Naive thymus-derived CD4-positive, alpha-beta T cell (primary cell): ENCODE measurements at regions of chr10 and their contacts with region 1.

Region 1: GRCh38 chr10:8331883-8332729 is 277.6 kb downstream of the GATA3 start:
- DNase-seq: peak; percentile 78 to 96 (median 93)
- ATAC-seq: peak; percentile 97
- H3K4me3 ChIP-seq: peak overlapping the region; percentile 71
- H3K4me3 Mint-ChIP-seq: peak overlapping the region; percentile 65 to 92 (median 84)
- H3K27ac ChIP-seq: peak overlapping the region; percentile 83
- H3K27ac Mint-ChIP-seq: peak overlapping the region; percentile 88 to 97 (median 93)
- H3K4me1 ChIP-seq: peaks cover 9 to 23% of the 10 kb centered on the region in 2 donors
- H3K4me1 Mint-ChIP-seq: peaks cover 21 to 53% (median 40%) of the 10 kb centered on the region in 7 donors
- H3K27me3 ChIP-seq: no peaks in the 10 kb centered on the region
- H3K27me3 Mint-ChIP-seq: peaks cover 0 to 10% (median 0%) of the 10 kb centered on the region in 5 donors

Region 2: GRCh38 chr10:7818295-7819122 is 513.6 kb before region 1 on chr10 and contains the start of gene TAF3:
- CTCF ChIA-PET with region 1: no interaction called
- POLR2A ChIA-PET with region 1: no interaction called
- intact Hi-C with region 1: loop called (anchors 1 to 10 kb)
- DNase-seq: peak; percentile 87 to 94 (median 91)
- ATAC-seq: peak; percentile 99
- H3K4me3 ChIP-seq: peak within 1 kb of the TSS; percentile 90
- H3K4me3 Mint-ChIP-seq: peak within 1 kb of the TSS; percentile 92 to 100 (median 97)
- H3K27ac ChIP-seq: peak within 1 kb of the TSS; percentile 75
- H3K27ac Mint-ChIP-seq: peak within 1 kb of the TSS; percentile 71 to 96 (median 93)
- H3K4me1 ChIP-seq: peaks cover 0 to 6% of the 10 kb centered on the region in 2 donors
- H3K4me1 Mint-ChIP-seq: peaks cover 28 to 56% (median 48%) of the 10 kb centered on the region in 7 donors
- H3K27me3 ChIP-seq: no peaks in the 10 kb centered on the region
- H3K27me3 Mint-ChIP-seq: peaks cover 0 to 34% (median 0%) of the 10 kb centered on the region in 5 donors
- total RNA-seq, gene TAF3: 15.3 to 23.9 (median 18.8) TPM

Region 3: GRCh38 chr10:8059959-8060703 is 272.0 kb before region 1 on chr10:
- CTCF ChIA-PET with region 1: interaction called, 5 read pairs
- POLR2A ChIA-PET with region 1: interaction called, 13 read pairs
- intact Hi-C with region 1: loop called (anchors 1 to 2 kb)
- DNase-seq: peak; percentile 17 to 79 (median 72)
- ATAC-seq: peak; percentile 45
- H3K4me3 ChIP-seq: peak overlapping the region; percentile 51
- H3K4me3 Mint-ChIP-seq: peak overlapping the region; percentile 87 to 100 (median 94)
- H3K27ac ChIP-seq: peak overlapping the region; percentile 82
- H3K27ac Mint-ChIP-seq: peak overlapping the region; percentile 88 to 99 (median 95)
- H3K4me1 ChIP-seq: peaks cover 52 to 62% of the 10 kb centered on the region in 2 donors
- H3K4me1 Mint-ChIP-seq: peaks cover 57 to 80% (median 76%) of the 10 kb centered on the region in 7 donors
- H3K27me3 ChIP-seq: no peaks in the 10 kb centered on the region
- H3K27me3 Mint-ChIP-seq: peaks cover 0 to 6% (median 0%) of the 10 kb centered on the region in 5 donors

Region 4: GRCh38 chr10:8183241-8183704 is 148.8 kb before region 1 on chr10:
- CTCF ChIA-PET with region 1: no interaction called
- POLR2A ChIA-PET with region 1: no interaction called
- intact Hi-C with region 1: loop called in 1 of 2 experiments (anchors 5 kb)
- DNase-seq: peak in 7 of 9 donors; percentile 38 to 67 (median 57)
- ATAC-seq: peak; percentile 95
- H3K4me3 ChIP-seq: no peak overlapping the region
- H3K4me3 Mint-ChIP-seq: peak overlapping the region; percentile 14 to 82 (median 56)
- H3K27ac ChIP-seq: peak overlapping the region; percentile 44
- H3K27ac Mint-ChIP-seq: peak overlapping the region; percentile 4 to 90 (median 80)
- H3K4me1 ChIP-seq: peaks cover 14 to 20% of the 10 kb centered on the region in 2 donors
- H3K4me1 Mint-ChIP-seq: peaks cover 18 to 42% (median 37%) of the 10 kb centered on the region in 7 donors
- H3K27me3 ChIP-seq: no peaks in the 10 kb centered on the region
- H3K27me3 Mint-ChIP-seq: peaks cover 0 to 20% (median 4%) of the 10 kb centered on the region in 5 donors

Region 5: DNA sequence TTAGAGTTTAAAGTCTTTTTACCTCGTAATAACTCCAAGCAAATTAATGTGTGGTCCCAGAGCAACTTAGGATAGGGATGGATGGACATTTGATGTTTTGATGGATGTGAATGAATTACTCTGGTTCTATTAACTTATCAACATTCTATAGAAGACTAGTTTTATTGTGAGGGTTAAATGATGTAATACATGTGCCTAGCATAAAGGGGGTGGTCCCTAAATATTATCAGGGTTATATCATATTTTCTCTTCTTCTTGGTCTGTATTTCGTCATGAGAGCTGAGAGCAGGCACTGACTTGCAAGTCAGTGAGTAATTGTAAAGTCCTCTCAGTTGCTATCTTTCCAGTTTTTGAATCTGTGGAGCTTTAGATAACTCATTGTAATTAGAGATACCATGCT is 58.4 kb before region 1 on chr10:
- CTCF ChIA-PET with region 1: no interaction called
- POLR2A ChIA-PET with region 1: no interaction called
- intact Hi-C with region 1: no loop called
- DNase-seq: no peak
- ATAC-seq: no peak
- H3K4me3 ChIP-seq: no peak overlapping the region
- H3K4me3 Mint-ChIP-seq: no peak overlapping the region
- H3K27ac ChIP-seq: no peak overlapping the region
- H3K27ac Mint-ChIP-seq: no peak overlapping the region
- H3K4me1 ChIP-seq: no peaks in the 10 kb centered on the region
- H3K4me1 Mint-ChIP-seq: peaks cover 0 to 5% (median 0%) of the 10 kb centered on the region in 7 donors
- H3K27me3 ChIP-seq: no peaks in the 10 kb centered on the region
- H3K27me3 Mint-ChIP-seq: peaks cover 0 to 4% (median 0%) of the 10 kb centered on the region in 5 donors

Region 6: GRCh38 chr10:8356299-8356698 is 24.2 kb after region 1 on chr10:
- CTCF ChIA-PET with region 1: no interaction called
- POLR2A ChIA-PET with region 1: no interaction called
- intact Hi-C with region 1: no loop called
- DNase-seq: no peak
- ATAC-seq: no peak
- H3K4me3 ChIP-seq: no peak overlapping the region
- H3K4me3 Mint-ChIP-seq: no peak overlapping the region
- H3K27ac ChIP-seq: no peak overlapping the region
- H3K27ac Mint-ChIP-seq: peak overlapping the region in 1 of 9 donors; percentile 24
- H3K4me1 ChIP-seq: peaks cover 0 to 13% of the 10 kb centered on the region in 2 donors
- H3K4me1 Mint-ChIP-seq: peaks cover 0 to 13% (median 0%) of the 10 kb centered on the region in 7 donors
- H3K27me3 ChIP-seq: no peaks in the 10 kb centered on the region
- H3K27me3 Mint-ChIP-seq: peaks cover 0 to 26% (median 0%) of the 10 kb centered on the region in 5 donors

Region 7: DNA sequence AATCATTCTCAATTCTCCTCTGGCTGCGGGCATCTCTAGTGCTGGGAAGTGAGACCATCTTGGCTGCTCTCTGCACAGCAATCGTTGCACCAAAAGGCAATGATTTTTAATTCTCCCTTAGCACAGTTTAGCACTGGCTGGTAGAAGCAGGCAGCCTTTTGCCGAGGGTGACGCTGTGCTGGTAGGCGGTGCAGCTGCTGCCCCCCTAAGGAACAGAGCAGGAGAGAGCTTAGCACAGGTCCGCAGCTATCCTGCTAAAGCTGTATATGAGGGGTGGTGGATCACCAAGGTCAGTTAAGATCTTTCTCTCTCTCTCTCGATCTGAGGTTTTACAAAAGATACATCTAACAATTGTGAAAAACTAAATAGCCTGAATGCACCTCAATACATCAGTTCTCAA is 112.5 kb after region 1 on chr10:
- CTCF ChIA-PET with region 1: interaction called, 3 read pairs
- POLR2A ChIA-PET with region 1: no interaction called
- intact Hi-C with region 1: loop called in 1 of 2 experiments (anchors 1 kb)
- DNase-seq: peak in 8 of 9 donors; percentile 14 to 63 (median 44)
- ATAC-seq: peak; percentile 94
- H3K4me3 ChIP-seq: no peak overlapping the region
- H3K4me3 Mint-ChIP-seq: no peak overlapping the region
- H3K27ac ChIP-seq: no peak overlapping the region
- H3K27ac Mint-ChIP-seq: peak overlapping the region in 3 of 9 donors; percentile 23 to 70 (median 65)
- H3K4me1 ChIP-seq: peaks cover 0 to 6% of the 10 kb centered on the region in 2 donors
- H3K4me1 Mint-ChIP-seq: peaks cover 0 to 17% (median 5%) of the 10 kb centered on the region in 7 donors
- H3K27me3 ChIP-seq: peaks cover 0 to 2% of the 10 kb centered on the region in 2 donors
- H3K27me3 Mint-ChIP-seq: peaks cover 0 to 36% (median 0%) of the 10 kb centered on the region in 5 donors

Region 8: GRCh38 chr10:9097206-9097985 is 765.3 kb after region 1 on chr10:
- CTCF ChIA-PET with region 1: no interaction called
- POLR2A ChIA-PET with region 1: no interaction called
- intact Hi-C with region 1: loop called in 1 of 2 experiments (anchors 2 kb)
- DNase-seq: peak in 7 of 9 donors; percentile 29 to 89 (median 81)
- ATAC-seq: peak; percentile 81
- H3K4me3 ChIP-seq: no peak overlapping the region
- H3K4me3 Mint-ChIP-seq: peak overlapping the region in 7 of 10 donors; percentile 30 to 82 (median 67)
- H3K27ac ChIP-seq: no peak overlapping the region
- H3K27ac Mint-ChIP-seq: peak overlapping the region in 8 of 9 donors; percentile 64 to 97 (median 90)
- H3K4me1 ChIP-seq: peaks cover 0 to 26% of the 10 kb centered on the region in 2 donors
- H3K4me1 Mint-ChIP-seq: peaks cover 10 to 47% (median 43%) of the 10 kb centered on the region in 7 donors
- H3K27me3 ChIP-seq: no peaks in the 10 kb centered on the region
- H3K27me3 Mint-ChIP-seq: peaks cover 0 to 2% (median 0%) of the 10 kb centered on the region in 5 donors